K562 (cell line): ENCODE measurements at regions of chr1 and their contacts with region 1.

Region 1: GRCh38 chr1:233668725-233669294 is 54.9 kb downstream of the KCNK1 start:
- DNase-seq: peak; percentile 86 to 97 (median 89)
- ATAC-seq: peak; percentile 95
- H3K4me3 ChIP-seq: no peak overlapping the region
- H3K27ac ChIP-seq: peak overlapping the region; percentile 72
- H3K4me1 ChIP-seq: peaks cover 24 to 44% of the 10 kb centered on the region in 2 experiments
- H3K27me3 ChIP-seq: no peaks in the 10 kb centered on the region
- CTCF ChIP-seq: no peak
- EP300 ChIP-seq: peak; percentile 95
- POLR2A ChIP-seq: no peak; the same call in 1 of the 2 replicates
- RAD21 ChIP-seq: no peak

Region 2: DNA sequence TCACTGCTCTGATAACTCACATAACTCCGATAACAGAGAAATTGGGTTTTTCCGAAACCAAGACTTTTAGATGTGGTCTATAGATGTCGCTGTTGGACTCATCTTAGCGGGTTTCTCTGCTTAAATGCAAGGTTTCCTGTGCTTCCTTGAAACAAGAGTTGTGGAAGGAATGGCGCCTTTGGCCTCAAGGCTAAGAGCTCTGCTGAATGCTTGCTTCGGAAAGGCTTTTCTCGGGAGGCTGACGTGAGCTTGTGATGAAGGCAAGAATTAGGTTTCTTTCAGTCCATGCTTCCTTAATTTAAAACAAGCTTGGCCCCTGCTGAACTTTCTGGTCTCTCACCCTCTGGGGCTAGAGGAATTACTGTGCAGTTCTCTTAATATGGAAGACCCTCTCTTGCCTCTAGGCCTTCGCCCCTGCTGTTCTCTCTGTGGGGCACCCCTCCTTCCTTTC is 227.8 kb before region 1 on chr1:
- CTCF ChIA-PET with region 1: no interaction called
- POLR2A ChIA-PET with region 1: no interaction called
- in situ Hi-C with region 1: no loop called
- intact Hi-C with region 1: loop called (anchors 5 kb)
- DNase-seq: peak; percentile 37 to 79 (median 52)
- ATAC-seq: peak; percentile 90
- H3K4me3 ChIP-seq: no peak overlapping the region
- H3K27ac ChIP-seq: no peak overlapping the region
- H3K4me1 ChIP-seq: peaks cover 0 to 4% of the 10 kb centered on the region in 2 experiments; a peak in 2 of 5 replicates
- H3K27me3 ChIP-seq: no peaks in the 10 kb centered on the region
- CTCF ChIP-seq: peak; percentile 78 to 95 (median 83)
- EP300 ChIP-seq: 0 out of 2 replicates have a peak, but pooled peaks have one; percentile 12
- POLR2A ChIP-seq: no peak
- RAD21 ChIP-seq: peak; percentile 91 to 95

Region 3: DNA sequence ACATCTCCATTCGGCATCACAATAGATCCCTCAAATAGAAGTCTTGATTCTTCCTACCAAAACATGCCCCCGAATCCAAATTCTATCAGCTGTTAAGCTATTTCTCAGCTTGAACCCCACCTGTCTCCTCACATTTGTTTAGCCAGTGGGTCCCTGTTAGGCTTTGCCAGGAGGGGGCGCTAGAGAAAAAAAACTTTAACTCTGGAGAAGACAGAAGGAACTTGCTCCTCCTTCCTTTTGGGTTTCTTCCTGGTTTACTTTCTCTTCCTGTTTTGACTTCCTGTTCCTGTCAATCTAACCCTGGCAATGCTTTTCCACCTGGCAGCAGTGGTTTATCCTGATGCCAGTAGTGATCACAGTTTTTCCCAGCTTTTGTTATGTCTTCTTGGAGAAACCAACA is 150.5 kb before region 1 on chr1:
- CTCF ChIA-PET with region 1: no interaction called
- POLR2A ChIA-PET with region 1: no interaction called
- in situ Hi-C with region 1: no loop called
- intact Hi-C with region 1: loop called (anchors 2 kb)
- DNase-seq: peak; percentile 73 to 81 (median 79)
- ATAC-seq: peak; percentile 90
- H3K4me3 ChIP-seq: no peak overlapping the region
- H3K27ac ChIP-seq: no peak overlapping the region; the same call in 2 of the 3 replicates
- H3K4me1 ChIP-seq: peaks cover 0 to 6% of the 10 kb centered on the region in 2 experiments; a peak in 1 of 5 replicates
- H3K27me3 ChIP-seq: no peaks in the 10 kb centered on the region
- CTCF ChIP-seq: peak; percentile 68 to 81 (median 77)
- EP300 ChIP-seq: no peak; the same call in 1 of the 2 replicates
- POLR2A ChIP-seq: no peak
- RAD21 ChIP-seq: peak; percentile 39 to 77; a peak in 3 of 4 replicates

Region 4: DNA sequence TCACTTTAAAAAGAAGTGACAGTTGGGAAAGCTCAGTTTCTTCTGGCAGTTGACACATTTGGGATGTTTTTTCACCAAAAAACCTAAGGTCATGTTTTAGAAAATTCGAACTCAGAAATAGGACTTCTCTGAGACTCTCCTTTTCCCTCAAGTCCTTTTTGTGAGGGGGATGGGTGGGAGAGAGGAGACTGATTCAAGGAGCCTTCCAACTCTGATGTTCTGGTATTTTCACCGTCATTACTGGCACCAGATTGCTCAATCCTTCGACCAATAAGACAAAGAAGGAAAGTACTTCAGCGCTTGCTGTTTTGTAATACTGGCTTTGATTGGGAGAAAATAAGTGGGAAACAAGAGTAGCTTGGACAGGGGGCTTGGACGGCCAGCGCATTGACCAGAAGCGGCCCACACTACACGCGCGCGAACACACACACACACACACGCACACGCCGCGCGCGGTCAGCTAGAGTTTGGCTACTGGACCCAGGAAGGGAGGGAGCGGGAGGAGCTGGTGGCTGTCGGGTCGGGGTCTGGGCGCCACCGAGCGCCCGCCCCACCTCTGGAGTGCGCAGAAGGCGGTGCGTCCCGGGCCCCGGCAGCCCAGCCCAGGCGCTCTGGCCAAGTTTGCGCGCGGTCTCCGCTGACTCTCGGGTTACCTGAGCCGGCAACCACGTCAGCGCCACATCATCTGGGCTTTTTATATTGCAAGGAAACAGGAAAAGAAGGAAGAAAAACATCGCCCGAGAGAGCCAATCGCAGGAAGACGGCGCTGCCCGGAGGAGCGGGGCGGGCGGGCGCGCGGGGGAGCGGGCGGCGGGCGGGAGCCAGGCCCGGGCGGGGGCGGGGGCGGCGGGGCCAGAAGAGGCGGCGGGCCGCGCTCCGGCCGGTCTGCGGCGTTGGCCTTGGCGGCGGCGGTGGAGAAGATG is 55.3 kb before region 1 on chr1 and contains the start of gene KCNK1:
- CTCF ChIA-PET with region 1: no interaction called
- POLR2A ChIA-PET with region 1: no interaction called
- in situ Hi-C with region 1: no loop called
- intact Hi-C with region 1: loop called (anchors 2 kb)
- DNase-seq: peak; percentile 76 to 80 (median 78)
- ATAC-seq: peak; percentile 76
- H3K4me3 ChIP-seq: peak within 1 kb of the TSS; percentile 58
- H3K27ac ChIP-seq: peak within 1 kb of the TSS; percentile 69
- H3K4me1 ChIP-seq: peaks cover 24 to 32% of the 10 kb centered on the region in 2 experiments; a peak in 4 of 5 replicates
- H3K27me3 ChIP-seq: no peaks in the 10 kb centered on the region
- CTCF ChIP-seq: no peak
- EP300 ChIP-seq: no peak
- POLR2A ChIP-seq: peak; percentile 76
- RAD21 ChIP-seq: no peak
- polyA plus RNA-seq, gene KCNK1: 3.1 to 3.5 TPM

Region 5: DNA sequence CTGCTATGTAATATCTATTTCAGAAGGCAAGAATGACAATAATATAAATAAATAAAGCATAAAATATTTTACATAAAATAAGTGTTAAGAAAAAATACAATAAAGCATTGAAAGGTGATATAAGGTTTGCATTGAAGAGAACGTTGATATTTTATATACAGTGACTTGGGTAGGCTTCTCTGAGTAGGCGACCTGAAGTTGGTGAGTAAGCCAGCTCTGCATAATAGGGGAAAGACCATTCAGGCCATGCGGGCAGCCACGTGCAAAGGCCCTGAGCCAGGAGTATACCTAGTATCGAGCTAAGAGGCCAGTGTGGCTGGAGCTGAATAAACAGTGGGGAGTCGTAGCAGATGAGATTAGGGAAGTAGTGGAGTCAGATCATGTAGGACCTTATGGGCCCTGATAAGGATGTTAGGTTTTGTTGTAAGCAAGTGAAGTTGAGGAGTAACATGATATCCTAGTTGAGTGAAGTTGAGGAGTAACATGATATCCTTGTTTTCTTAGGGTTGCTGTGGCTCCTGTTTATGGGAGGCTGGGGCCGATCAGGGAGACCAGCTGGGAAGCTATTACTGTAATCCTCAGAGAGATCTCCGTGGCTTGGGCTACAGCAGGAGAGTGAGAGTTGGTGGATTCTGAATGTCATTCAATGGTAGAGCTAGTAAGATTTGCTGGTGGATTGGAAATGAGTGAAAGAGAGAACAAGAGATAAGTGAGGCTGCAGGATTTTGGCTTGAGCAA is 32.9 kb before region 1 on chr1:
- CTCF ChIA-PET with region 1: no interaction called
- POLR2A ChIA-PET with region 1: interaction called, 8 read pairs
- in situ Hi-C with region 1: no loop called
- intact Hi-C with region 1: loop called (anchors 1 kb)
- DNase-seq: peak; percentile 92 to 98 (median 94)
- ATAC-seq: peak; percentile 97
- H3K4me3 ChIP-seq: no peak overlapping the region; the same call in 1 of the 2 replicates
- H3K27ac ChIP-seq: peak overlapping the region; percentile 90
- H3K4me1 ChIP-seq: peaks cover 11 to 43% of the 10 kb centered on the region in 2 experiments
- H3K27me3 ChIP-seq: no peaks in the 10 kb centered on the region
- CTCF ChIP-seq: 0 out of 6 replicates have a peak, but pooled peaks of 1 of the 3 experiments have one; percentile 6
- EP300 ChIP-seq: peak; percentile 98
- POLR2A ChIP-seq: peak; percentile 56; the same call in 1 of the 2 replicates
- RAD21 ChIP-seq: peak; percentile 4 to 41; a peak in 2 of 4 replicates

Region 6: GRCh38 chr1:233707153-233707879 is 38.5 kb after region 1 on chr1:
- CTCF ChIA-PET with region 1: no interaction called
- POLR2A ChIA-PET with region 1: interaction called, 3 read pairs
- in situ Hi-C with region 1: no loop called
- intact Hi-C with region 1: loop called (anchors 1 kb)
- DNase-seq: peak; percentile 37 to 89 (median 65)
- ATAC-seq: peak; percentile 93
- H3K4me3 ChIP-seq: no peak overlapping the region
- H3K27ac ChIP-seq: peak overlapping the region; percentile 73
- H3K4me1 ChIP-seq: peaks cover 7 to 45% of the 10 kb centered on the region in 2 experiments; a peak in 4 of 5 replicates
- H3K27me3 ChIP-seq: no peaks in the 10 kb centered on the region
- CTCF ChIP-seq: peak; percentile 43 to 53 (median 51); a peak in 4 of 6 replicates
- EP300 ChIP-seq: peak; percentile 85
- POLR2A ChIP-seq: no peak
- RAD21 ChIP-seq: peak; percentile 10 to 43; a peak in 2 of 4 replicates

Region 7: GRCh38 chr1:233945573-233945972 is 276.8 kb after region 1 on chr1:
- CTCF ChIA-PET with region 1: no interaction called
- POLR2A ChIA-PET with region 1: no interaction called
- in situ Hi-C with region 1: no loop called
- intact Hi-C with region 1: no loop called
- DNase-seq: no peak
- ATAC-seq: no peak
- H3K4me3 ChIP-seq: no peak overlapping the region
- H3K27ac ChIP-seq: no peak overlapping the region
- H3K4me1 ChIP-seq: no peaks in the 10 kb centered on the region
- H3K27me3 ChIP-seq: peaks cover 4 to 13% of the 10 kb centered on the region in 2 experiments; a peak in 3 of 5 replicates
- CTCF ChIP-seq: no peak
- EP300 ChIP-seq: no peak
- POLR2A ChIP-seq: no peak
- RAD21 ChIP-seq: no peak